ENCODE measurements at regions of chr5 and their contacts with region 1.

Region 1: GRCh38 chr5:25763781-25764180 is 1119.0 kb upstream of the CDH10 start:
- DNase-seq: no peak

Region 2: DNA sequence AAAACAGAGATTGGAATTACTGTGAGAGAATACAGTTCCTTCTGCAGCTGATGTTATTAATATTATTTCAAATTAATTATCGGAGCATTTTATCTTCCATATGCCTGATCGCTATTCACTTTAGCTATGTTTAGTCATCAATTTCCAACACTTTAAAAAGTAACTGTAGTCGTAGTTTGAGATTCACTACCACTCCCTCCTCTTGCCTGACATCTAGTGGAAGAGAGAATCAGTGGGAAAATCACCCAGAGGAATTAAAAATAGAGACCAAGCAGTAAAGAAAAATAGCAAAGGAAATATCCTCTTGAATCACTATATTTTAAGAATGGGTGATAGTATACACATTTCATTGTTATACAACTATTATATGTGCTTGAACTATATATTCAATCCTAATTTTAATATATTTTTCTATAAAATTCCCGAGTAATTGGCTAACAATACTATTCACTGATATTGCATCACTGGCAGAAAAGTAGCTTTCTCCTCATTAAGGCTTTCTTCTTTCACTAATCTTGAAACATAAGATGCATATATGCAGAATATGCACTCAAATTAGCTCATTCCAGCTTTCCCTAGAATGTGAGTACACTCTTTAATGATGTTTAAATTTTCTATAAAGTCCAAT is 565.9 kb after region 1 on chr5:
- intact Hi-C with region 1: loop called in 1 of 2 experiments (anchors 5 kb)
- DNase-seq: no peak

Region 3: GRCh38 chr5:27502236-27502635 is 1738.5 kb after region 1 on chr5:
- intact Hi-C with region 1: no loop called
- DNase-seq: no peak

Measured in posterior vena cava (tissue), 2 donors.